A673 (cell line): ENCODE measurements at regions of chr21 and their contacts with region 1.

Region 1: GRCh38 chr21:28745131-28746016 is 247.3 kb downstream of the LTN1 start:
- DNase-seq: peak; percentile 80
- H3K4me3 ChIP-seq: peak overlapping the region; percentile 41
- H3K27ac ChIP-seq: no peak overlapping the region
- H3K4me1 ChIP-seq: no peaks in the 10 kb centered on the region
- H3K27me3 ChIP-seq: no peaks in the 10 kb centered on the region
- CTCF ChIP-seq: peak; percentile 88

Region 2: GRCh38 chr21:26850108-26850643 is 1895.2 kb before region 1 on chr21:
- CTCF ChIA-PET with region 1: interaction called, 3 read pairs
- POLR2A ChIA-PET with region 1: no interaction called
- intact Hi-C with region 1: loop called (anchors 2 kb)
- DNase-seq: peak; percentile 71
- H3K4me3 ChIP-seq: no peak overlapping the region
- H3K27ac ChIP-seq: no peak overlapping the region
- H3K4me1 ChIP-seq: peaks cover 6% of the 10 kb centered on the region
- H3K27me3 ChIP-seq: no peaks in the 10 kb centered on the region
- CTCF ChIP-seq: peak; percentile 66

Region 3: DNA sequence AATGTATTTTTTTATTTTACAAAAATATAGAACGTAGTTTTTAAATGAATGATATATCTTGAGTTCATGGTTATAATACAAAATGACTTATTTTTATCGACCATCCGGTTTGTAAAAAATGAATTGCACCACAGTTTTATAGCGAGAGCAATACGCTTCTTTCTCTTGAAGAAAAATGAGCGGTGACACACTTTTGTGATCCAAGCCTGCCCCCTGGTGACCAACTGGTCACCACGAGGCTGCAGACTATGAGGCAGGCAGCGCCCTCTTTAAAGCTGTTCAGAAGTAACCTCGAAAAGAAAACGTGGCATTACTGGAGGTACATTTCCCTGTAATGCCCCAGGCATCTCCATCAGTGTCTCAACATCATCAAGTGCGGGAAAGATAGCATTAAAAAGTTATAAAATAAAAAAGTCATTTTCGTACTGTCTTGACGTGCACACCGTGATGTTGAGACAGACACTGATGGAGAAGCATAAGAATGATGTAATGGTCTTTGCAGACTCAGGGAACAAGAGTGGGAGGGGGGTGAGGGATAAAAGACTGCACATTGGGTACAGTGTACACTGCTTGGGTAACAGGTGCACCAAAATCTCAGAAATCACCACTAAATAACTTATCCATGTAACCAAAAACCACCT is 1044.3 kb before region 1 on chr21:
- CTCF ChIA-PET with region 1: interaction called, 5 read pairs
- POLR2A ChIA-PET with region 1: no interaction called
- intact Hi-C with region 1: loop called (anchors 2 kb)
- DNase-seq: peak; percentile 84
- H3K4me3 ChIP-seq: no peak overlapping the region
- H3K27ac ChIP-seq: no peak overlapping the region
- H3K4me1 ChIP-seq: no peaks in the 10 kb centered on the region
- H3K27me3 ChIP-seq: no peaks in the 10 kb centered on the region
- CTCF ChIP-seq: peak; percentile 86

Region 4: GRCh38 chr21:28516991-28517592 is 228.3 kb before region 1 on chr21:
- CTCF ChIA-PET with region 1: interaction called, 15 read pairs
- POLR2A ChIA-PET with region 1: no interaction called
- intact Hi-C with region 1: loop called (anchors 2 kb)
- DNase-seq: peak; percentile 61
- H3K4me3 ChIP-seq: no peak overlapping the region
- H3K27ac ChIP-seq: no peak overlapping the region
- H3K4me1 ChIP-seq: no peaks in the 10 kb centered on the region
- H3K27me3 ChIP-seq: no peaks in the 10 kb centered on the region
- CTCF ChIP-seq: peak; percentile 76

Region 5: DNA sequence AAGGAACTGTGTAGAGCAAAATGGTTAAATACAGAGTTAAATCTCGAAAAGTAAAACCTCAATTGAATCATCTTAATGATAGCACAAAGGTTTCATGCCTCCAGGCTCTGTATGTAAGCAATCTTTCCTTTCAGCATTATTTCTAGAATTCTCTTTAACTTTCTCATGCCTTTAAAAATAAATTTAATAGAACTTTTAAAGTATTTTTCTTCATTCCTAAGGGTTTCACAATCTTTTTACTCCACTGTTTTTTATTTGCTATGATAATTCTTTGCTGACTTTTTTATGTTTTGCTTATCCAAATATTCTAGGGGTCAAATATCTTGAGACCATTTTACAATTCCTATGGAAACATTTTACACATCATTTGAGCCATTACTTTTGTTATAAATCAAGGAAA is 841.3 kb after region 1 on chr21:
- CTCF ChIA-PET with region 1: no interaction called
- POLR2A ChIA-PET with region 1: no interaction called
- intact Hi-C with region 1: no loop called
- DNase-seq: no peak
- H3K4me3 ChIP-seq: no peak overlapping the region
- H3K27ac ChIP-seq: no peak overlapping the region
- H3K4me1 ChIP-seq: no peaks in the 10 kb centered on the region
- H3K27me3 ChIP-seq: no peaks in the 10 kb centered on the region
- CTCF ChIP-seq: no peak